ENCODE measurements at regions of chr10 and their contacts with region 1.

Region 1: DNA sequence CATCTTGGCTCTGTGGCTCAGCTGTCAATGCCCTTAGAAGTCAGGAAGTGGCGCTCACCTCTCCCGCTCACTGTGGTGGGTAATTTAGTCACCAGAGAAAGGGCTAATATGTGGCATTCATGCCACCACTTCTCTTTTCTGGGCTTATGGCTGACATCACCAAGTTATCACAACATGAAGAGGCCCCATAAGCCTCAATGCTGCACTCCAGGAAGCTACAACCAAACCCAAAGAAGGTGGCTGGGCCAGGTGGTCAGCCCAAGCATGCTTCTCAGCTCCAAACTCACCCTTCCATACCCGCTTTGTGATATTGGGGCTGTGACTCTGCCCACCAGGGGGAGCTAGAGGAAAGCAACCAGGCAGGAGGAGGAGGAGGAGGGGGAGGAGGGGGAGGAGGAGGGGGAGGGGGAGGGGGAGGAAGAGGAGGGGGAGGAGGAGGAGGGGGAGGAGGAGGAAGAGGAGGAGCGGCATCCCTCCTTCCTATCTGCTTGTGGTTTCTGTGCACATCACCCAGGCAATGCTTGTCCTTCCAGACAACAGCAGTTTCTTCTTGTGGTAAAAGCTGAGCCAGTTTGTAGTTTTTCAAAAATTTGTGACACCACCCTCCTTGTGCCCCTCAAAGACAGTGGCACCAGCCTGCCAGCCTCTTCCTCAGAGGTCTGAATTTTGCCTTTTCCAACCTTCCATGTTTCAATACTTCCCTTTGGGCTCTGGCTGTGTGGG is 42.1 kb downstream of the CYP26A1 start:
- DNase-seq: peak in 1 of 2 experiments; percentile 53
- H3K4me3 ChIP-seq: no peak overlapping the region
- H3K27ac ChIP-seq: no peak overlapping the region
- H3K4me1 ChIP-seq: no peaks in the 10 kb centered on the region
- H3K27me3 ChIP-seq: no peaks in the 10 kb centered on the region
- CTCF ChIP-seq: peak; percentile 64

Region 2: DNA sequence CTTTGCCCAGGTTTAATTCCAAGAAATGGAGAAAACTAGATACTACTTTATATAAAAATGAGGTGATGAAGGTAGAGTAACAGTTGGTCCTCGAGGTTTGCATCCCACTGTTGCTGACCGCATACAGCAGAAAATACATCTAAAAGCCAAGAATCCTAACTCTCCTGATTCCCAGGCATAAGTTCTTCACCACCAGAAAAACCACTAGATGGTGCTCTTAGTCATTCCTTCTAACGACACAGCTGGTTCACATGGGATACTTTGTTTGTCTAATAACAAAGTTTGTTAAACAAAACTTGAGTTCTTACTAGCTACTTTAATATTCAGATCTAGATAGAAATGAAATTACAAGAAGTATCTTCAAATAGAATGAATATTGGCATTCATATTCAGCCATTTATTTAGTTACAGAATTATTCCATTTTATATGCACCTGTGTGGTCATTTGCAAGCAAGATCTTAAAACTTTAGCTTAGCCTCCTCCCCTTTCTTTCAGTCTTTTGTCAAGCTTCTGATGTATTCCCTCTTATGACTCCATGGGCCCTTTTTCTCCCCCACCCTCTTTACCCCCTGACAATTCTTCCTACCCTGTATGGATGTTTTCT is 109.3 kb before region 1 on chr10:
- CTCF ChIA-PET with region 1: no interaction called
- POLR2A ChIA-PET with region 1: no interaction called
- intact Hi-C with region 1: no loop called
- DNase-seq: peak in 1 of 2 experiments; percentile 39
- H3K4me3 ChIP-seq: no peak overlapping the region
- H3K27ac ChIP-seq: no peak overlapping the region
- H3K4me1 ChIP-seq: no peaks in the 10 kb centered on the region
- H3K27me3 ChIP-seq: no peaks in the 10 kb centered on the region
- CTCF ChIP-seq: peak; percentile 57

Region 3: DNA sequence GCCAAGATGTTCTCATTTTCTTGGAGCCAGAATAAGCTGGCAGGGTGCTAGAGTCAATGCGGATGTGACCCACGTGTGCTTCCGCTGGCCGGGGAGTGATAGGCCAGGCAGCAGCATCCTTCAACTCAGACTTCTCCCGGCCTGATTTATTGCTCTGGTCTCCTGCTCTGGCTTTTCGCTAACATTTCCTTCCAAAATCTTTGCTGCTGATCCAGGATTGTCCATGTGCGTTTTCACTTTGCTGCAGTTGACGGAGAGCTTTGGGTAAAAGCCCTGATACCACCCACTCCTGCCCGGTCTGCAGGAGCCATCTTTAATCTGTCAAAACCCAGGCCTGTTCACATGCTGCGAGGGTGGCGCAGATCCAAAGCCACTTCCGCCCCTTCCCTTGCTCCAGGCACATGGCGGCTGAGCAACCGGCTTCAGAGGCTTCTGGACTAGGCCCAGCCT is 64.7 kb after region 1 on chr10:
- CTCF ChIA-PET with region 1: interaction called, 10 read pairs
- POLR2A ChIA-PET with region 1: no interaction called
- intact Hi-C with region 1: no loop called
- DNase-seq: no peak
- H3K4me3 ChIP-seq: no peak overlapping the region
- H3K27ac ChIP-seq: no peak overlapping the region
- H3K4me1 ChIP-seq: no peaks in the 10 kb centered on the region; the same call in 1 of the 2 replicates
- H3K27me3 ChIP-seq: no peaks in the 10 kb centered on the region
- CTCF ChIP-seq: no peak

Region 4: GRCh38 chr10:93199191-93199751 is 83.4 kb after region 1 on chr10:
- CTCF ChIA-PET with region 1: interaction called, 12 read pairs
- POLR2A ChIA-PET with region 1: no interaction called
- intact Hi-C with region 1: no loop called
- DNase-seq: peak in 1 of 2 experiments; percentile 31
- H3K4me3 ChIP-seq: no peak overlapping the region
- H3K27ac ChIP-seq: no peak overlapping the region
- H3K4me1 ChIP-seq: no peaks in the 10 kb centered on the region
- H3K27me3 ChIP-seq: no peaks in the 10 kb centered on the region
- CTCF ChIP-seq: no peak